Transverse colon (tissue), 4 donors: ENCODE measurements at regions of chr5 and their contacts with region 1.

Region 1: DNA sequence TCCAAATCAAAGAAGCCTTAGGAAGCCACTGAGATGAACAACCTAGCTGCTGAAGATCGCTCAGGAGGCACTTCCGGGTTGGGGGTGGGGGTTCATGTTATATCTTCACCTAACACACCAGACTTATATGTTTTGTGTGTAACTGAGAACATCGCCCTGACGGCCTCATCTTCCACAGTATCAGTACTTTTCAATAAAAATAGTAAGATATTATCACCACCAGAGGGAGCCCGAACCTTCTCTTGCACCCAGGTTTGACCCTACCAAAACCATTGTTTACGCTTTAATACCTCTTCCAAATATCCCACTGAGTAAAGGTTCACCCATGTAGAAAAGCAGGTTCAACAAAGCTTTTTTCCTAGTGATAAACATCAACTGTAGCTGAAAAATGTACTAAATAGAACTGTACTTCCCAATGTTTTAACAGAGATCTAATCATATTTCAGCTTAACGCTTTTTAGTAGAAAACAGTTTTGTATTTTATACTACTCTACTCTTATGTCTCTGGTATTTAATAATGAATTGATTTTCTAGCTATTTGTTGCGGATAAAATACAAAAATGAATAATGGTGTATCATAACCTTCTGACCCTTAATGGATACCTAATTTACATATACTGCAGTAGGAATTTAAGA is 244.0 kb downstream of the EPB41L4A start:
- DNase-seq: no peak
- H3K4me3 ChIP-seq: no peak overlapping the region
- H3K27ac ChIP-seq: no peak overlapping the region
- H3K4me1 ChIP-seq: peaks cover 0 to 4% (median 1%) of the 10 kb centered on the region in 4 donors
- H3K27me3 ChIP-seq: no peaks in the 10 kb centered on the region
- CTCF ChIP-seq: peak; percentile 52 to 66 (median 58)
- EP300 ChIP-seq: no peak
- POLR2A ChIP-seq: no peak

Region 2: GRCh38 chr5:112529525-112529924 is 354.4 kb after region 1 on chr5:
- in situ Hi-C with region 1: loop called in 1 of 4 experiments (anchors 25 kb)
- intact Hi-C with region 1: no loop called
- DNase-seq: no peak
- H3K4me3 ChIP-seq: no peak overlapping the region
- H3K27ac ChIP-seq: no peak overlapping the region
- H3K4me1 ChIP-seq: no peaks in the 10 kb centered on the region
- H3K27me3 ChIP-seq: no peaks in the 10 kb centered on the region
- CTCF ChIP-seq: peak in 3 of 5 experiments; percentile 31 to 55 (median 33)
- EP300 ChIP-seq: no peak
- POLR2A ChIP-seq: no peak

Region 3: DNA sequence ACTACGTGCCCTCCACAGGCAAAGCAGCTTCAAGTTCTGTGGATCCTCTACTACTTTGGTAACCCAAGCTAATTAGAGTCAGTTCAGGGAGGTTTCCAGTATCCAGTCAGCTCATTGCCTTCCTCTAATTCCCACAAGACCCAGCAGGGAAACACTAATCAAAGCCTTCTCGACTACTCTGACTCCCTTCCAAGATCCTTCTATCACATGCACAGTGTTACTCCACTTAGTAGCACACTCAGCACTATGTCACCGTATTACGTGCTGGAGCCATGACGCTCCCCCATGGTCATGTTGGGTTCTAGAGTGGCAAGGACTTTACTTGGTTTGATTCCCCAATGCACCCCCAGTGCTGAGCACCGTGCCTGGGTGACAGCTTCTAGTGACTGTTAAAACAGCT is 854.5 kb after region 1 on chr5:
- in situ Hi-C with region 1: no loop called
- intact Hi-C with region 1: no loop called
- DNase-seq: no peak
- H3K4me3 ChIP-seq: no peak overlapping the region
- H3K27ac ChIP-seq: no peak overlapping the region
- H3K4me1 ChIP-seq: no peaks in the 10 kb centered on the region
- H3K27me3 ChIP-seq: no peaks in the 10 kb centered on the region
- CTCF ChIP-seq: no peak
- EP300 ChIP-seq: no peak
- POLR2A ChIP-seq: no peak